ENCODE measurements at regions of chr6 and their contacts with region 1.

Region 1: DNA sequence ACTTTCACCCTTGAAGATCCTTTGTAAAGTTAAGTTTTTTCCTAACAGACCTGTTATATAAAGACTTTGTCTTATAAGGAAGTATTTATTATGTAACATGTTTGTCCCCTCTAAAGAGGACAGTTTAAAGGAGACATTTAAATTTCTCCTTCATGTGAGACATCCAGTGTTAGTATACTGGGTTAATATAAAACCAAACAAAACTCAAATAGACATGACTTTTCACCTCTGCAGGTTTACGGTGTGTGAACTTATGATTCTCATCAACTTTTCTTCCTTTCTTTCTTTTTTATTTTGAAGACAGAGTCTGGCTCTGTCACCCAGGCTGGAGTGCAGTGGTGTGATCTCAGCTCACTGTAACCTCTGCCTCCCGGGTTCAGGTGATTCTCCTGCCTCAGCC is 17.4 kb upstream of the MPC1 start:
- DNase-seq: no peak
- ATAC-seq: no peak
- H3K4me3 ChIP-seq: no peak overlapping the region
- H3K4me3 Mint-ChIP-seq: no peak overlapping the region
- H3K27ac ChIP-seq: no peak overlapping the region
- H3K27ac Mint-ChIP-seq: no peak overlapping the region
- H3K4me1 ChIP-seq: peaks cover 0 to 6% of the 10 kb centered on the region in 2 experiments
- H3K4me1 Mint-ChIP-seq: peaks cover 5 to 8% (median 8%) of the 10 kb centered on the region in 3 donors
- H3K27me3 ChIP-seq: peaks cover 0 to 25% of the 10 kb centered on the region in 2 experiments
- H3K27me3 Mint-ChIP-seq: peaks cover 3 to 15% of the 10 kb centered on the region in 2 donors

Region 2: GRCh38 chr6:166275714-166276166 is 124.4 kb before region 1 on chr6:
- CTCF ChIA-PET with region 1: interaction called, 12 to 13 read pairs
- POLR2A ChIA-PET with region 1: no interaction called
- DNase-seq: peak; percentile 37 to 85 (median 70)
- ATAC-seq: peak; percentile 88 to 95 (median 94)
- H3K4me3 ChIP-seq: no peak overlapping the region
- H3K4me3 Mint-ChIP-seq: no peak overlapping the region
- H3K27ac ChIP-seq: no peak overlapping the region
- H3K27ac Mint-ChIP-seq: peak overlapping the region in 1 of 2 donors; percentile 43
- H3K4me1 ChIP-seq: peaks cover 0 to 4% of the 10 kb centered on the region in 2 experiments
- H3K4me1 Mint-ChIP-seq: peaks cover 0 to 8% (median 2%) of the 10 kb centered on the region in 3 donors
- H3K27me3 ChIP-seq: peaks cover 0 to 12% of the 10 kb centered on the region in 2 experiments
- H3K27me3 Mint-ChIP-seq: peaks cover 0 to 1% of the 10 kb centered on the region in 2 donors

Region 3: GRCh38 chr6:166281104-166281503 is 119.1 kb before region 1 on chr6:
- CTCF ChIA-PET with region 1: interaction called, 12 to 13 read pairs
- POLR2A ChIA-PET with region 1: no interaction called
- DNase-seq: no peak
- ATAC-seq: no peak
- H3K4me3 ChIP-seq: no peak overlapping the region
- H3K4me3 Mint-ChIP-seq: no peak overlapping the region
- H3K27ac ChIP-seq: no peak overlapping the region
- H3K27ac Mint-ChIP-seq: no peak overlapping the region
- H3K4me1 ChIP-seq: no peaks in the 10 kb centered on the region
- H3K4me1 Mint-ChIP-seq: peaks cover 0 to under 1% (median 0%) of the 10 kb centered on the region in 3 donors
- H3K27me3 ChIP-seq: peaks cover 0 to 20% of the 10 kb centered on the region in 2 experiments
- H3K27me3 Mint-ChIP-seq: peaks cover 6 to 9% of the 10 kb centered on the region in 2 donors

Region 4: DNA sequence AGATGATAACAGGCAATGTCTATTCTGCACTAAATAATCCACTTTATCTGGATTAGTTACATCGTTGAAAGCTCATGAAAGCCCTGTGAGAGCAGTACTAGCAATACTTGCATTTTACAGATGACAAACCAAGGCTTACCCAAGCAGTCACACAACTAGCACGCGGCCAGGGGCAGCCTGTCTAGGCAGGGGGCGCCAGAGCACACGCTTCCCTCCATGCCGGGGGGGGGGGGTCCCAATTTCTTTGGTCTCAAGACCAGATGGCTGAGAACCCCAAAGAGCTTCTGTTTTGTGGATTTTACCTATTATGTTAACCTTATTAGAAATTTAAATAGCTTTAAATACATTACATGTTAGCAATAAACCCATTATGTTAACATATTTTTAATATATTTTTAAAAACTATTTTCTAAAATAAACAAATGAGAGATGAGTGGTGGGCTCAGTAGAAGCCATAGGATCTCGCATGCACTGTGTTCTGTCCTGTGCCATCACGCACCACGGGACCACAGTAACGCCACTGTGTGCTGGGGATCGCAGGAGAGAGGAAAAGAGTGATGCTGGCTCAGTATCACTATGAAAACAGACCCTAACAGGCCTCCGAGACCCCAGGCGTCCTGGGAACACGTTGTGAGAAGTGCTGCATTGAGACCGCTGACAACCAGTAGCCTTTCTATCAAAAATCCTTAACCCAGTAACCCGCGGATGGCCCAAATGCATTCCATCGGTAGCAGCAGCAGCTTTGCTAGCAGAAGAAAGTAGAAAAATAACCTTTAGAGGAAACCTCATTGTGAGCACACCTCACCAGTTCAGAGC is 86.7 kb before region 1 on chr6:
- CTCF ChIA-PET with region 1: interaction called, 5 to 14 read pairs
- POLR2A ChIA-PET with region 1: no interaction called
- DNase-seq: peak in 28 of 35 experiments; percentile 12 to 75 (median 48)
- ATAC-seq: peak; percentile 49 to 85 (median 68)
- H3K4me3 ChIP-seq: no peak overlapping the region
- H3K4me3 Mint-ChIP-seq: no peak overlapping the region
- H3K27ac ChIP-seq: no peak overlapping the region
- H3K27ac Mint-ChIP-seq: no peak overlapping the region
- H3K4me1 ChIP-seq: peaks cover 0 to 2% of the 10 kb centered on the region in 2 experiments
- H3K4me1 Mint-ChIP-seq: peaks cover 0 to 4% (median 2%) of the 10 kb centered on the region in 3 donors
- H3K27me3 ChIP-seq: peaks cover 4 to 17% of the 10 kb centered on the region in 2 experiments
- H3K27me3 Mint-ChIP-seq: peaks cover 16 to 19% of the 10 kb centered on the region in 2 donors

Region 5: DNA sequence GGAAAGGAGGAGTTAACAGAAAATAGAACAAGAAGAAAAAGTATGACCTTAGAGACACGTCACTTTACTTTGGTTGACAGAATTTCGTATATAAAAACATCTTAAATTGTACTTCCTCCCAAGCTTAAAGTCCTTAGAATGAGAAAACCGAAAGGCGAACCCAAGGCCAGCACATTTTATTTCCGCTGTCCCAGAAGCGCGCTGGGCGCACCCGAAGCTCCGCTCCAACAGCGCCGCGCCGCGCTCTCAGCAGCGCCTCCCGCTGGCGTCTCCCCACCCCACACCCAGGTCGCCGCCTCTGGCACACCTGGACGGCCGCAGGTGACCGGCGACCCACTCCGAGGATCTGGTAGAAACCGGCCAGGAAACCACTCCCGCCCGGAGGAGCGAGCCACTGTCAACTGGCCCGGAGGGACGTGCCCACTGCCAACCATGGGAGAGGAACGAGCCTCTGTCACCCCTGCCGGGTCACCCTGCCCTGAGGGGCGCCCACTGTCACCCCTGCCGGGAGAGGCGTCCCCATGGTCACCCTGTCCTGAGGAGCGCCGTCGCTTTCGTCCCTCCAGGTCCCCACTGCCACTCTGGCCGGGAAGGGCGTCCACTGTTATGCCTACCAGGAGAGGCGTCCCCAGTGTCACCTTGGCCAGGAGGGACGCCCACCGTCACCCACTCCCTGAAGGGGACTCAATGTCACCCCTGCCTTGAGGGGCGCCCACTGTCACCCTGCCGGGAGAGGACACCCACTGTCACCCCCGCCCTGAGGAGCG is 18.3 kb before region 1 on chr6:
- CTCF ChIA-PET with region 1: interaction called, 12 to 13 read pairs
- POLR2A ChIA-PET with region 1: interaction called in 1 of 2 experiments, 3 read pairs
- DNase-seq: peak in 34 of 35 experiments; percentile 33 to 79 (median 52)
- ATAC-seq: peak; percentile 29 to 35 (median 30)
- H3K4me3 ChIP-seq: peak overlapping the region; percentile 59 to 84
- H3K4me3 Mint-ChIP-seq: peak overlapping the region; percentile 91 to 95 (median 92)
- H3K27ac ChIP-seq: no peak overlapping the region
- H3K27ac Mint-ChIP-seq: peak overlapping the region; percentile 59 to 78
- H3K4me1 ChIP-seq: peaks cover 11 to 14% of the 10 kb centered on the region in 2 experiments
- H3K4me1 Mint-ChIP-seq: peaks cover 10 to 18% (median 15%) of the 10 kb centered on the region in 3 donors
- H3K27me3 ChIP-seq: no peaks in the 10 kb centered on the region
- H3K27me3 Mint-ChIP-seq: no peaks in the 10 kb centered on the region

Region 6: GRCh38 chr6:166411721-166412151 is 11.6 kb after region 1 on chr6:
- CTCF ChIA-PET with region 1: interaction called, 9 to 12 read pairs
- POLR2A ChIA-PET with region 1: no interaction called
- DNase-seq: peak in 32 of 35 experiments; percentile 10 to 67 (median 36)
- ATAC-seq: peak; percentile 75 to 80 (median 78)
- H3K4me3 ChIP-seq: peak overlapping the region; percentile 21 to 56
- H3K4me3 Mint-ChIP-seq: peak overlapping the region; percentile 69 to 81 (median 73)
- H3K27ac ChIP-seq: peak overlapping the region; percentile 53
- H3K27ac Mint-ChIP-seq: peak overlapping the region; percentile 97
- H3K4me1 ChIP-seq: peaks cover 49 to 62% of the 10 kb centered on the region in 2 experiments
- H3K4me1 Mint-ChIP-seq: peaks cover 72 to 77% (median 77%) of the 10 kb centered on the region in 3 donors
- H3K27me3 ChIP-seq: no peaks in the 10 kb centered on the region
- H3K27me3 Mint-ChIP-seq: no peaks in the 10 kb centered on the region